Activated CD8-positive, alpha-beta memory T cell treated with anti-CD3 and anti-CD28 coated beads, Interleukin-2, amount 10 ng/mL, durations not matched to agents 7 days and 5 days (primary cell): ENCODE measurements at regions of chr22 and their contacts with region 1.

Region 1: DNA sequence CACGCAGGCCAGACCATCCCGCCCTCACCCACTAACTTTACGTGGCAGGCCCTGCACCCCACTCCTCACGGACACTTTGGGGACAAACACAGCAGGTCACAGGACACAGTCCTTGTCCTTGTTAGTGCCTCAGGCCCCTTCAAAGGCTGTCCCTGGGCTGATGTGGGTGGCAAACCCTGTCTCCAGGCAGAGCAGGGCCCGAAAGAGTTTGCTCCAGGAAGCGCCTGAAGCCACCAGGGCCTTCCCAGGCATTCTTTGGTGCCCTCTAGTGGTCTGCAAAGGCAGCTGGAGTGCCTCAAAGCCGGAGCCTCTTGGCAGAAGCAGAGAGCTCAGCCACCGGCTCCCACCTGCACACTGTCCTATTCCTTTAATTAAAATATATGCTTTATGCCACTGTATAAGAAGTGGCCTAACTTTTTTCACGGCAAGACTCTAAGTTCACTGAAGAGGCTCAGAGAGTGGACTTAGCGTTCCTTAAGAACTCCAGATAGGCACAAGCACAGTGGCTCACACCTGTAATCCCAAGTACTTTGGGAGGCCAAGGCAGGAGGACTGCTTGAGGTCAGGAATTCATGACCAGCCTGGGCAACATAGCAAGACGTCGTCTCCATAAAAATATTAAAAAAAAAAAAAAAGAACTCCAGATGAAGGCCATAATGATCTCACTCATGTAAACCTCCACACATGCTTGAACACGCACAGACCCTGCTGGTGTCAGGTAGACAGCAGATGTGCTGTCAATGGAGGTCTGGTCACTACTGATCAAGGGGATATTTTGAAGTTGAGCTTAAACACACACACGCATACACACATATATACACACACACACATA is 11.1 kb downstream of the TXN2 start:
- DNase-seq: peak; percentile 91
- ATAC-seq: peak; percentile 95
- H3K4me3 Mint-ChIP-seq: no peak overlapping the region
- H3K27ac Mint-ChIP-seq: peak overlapping the region; percentile 76
- H3K4me1 Mint-ChIP-seq: peaks cover 35% of the 10 kb centered on the region
- H3K27me3 Mint-ChIP-seq: no peaks in the 10 kb centered on the region

Region 2: GRCh38 chr22:36211237-36211861 is 259.0 kb before region 1 on chr22:
- CTCF ChIA-PET with region 1: no interaction called
- DNase-seq: peak; percentile 56
- ATAC-seq: no peak
- H3K4me3 Mint-ChIP-seq: no peak overlapping the region
- H3K27ac Mint-ChIP-seq: no peak overlapping the region
- H3K4me1 Mint-ChIP-seq: peaks cover 32% of the 10 kb centered on the region
- H3K27me3 Mint-ChIP-seq: peaks cover 58% of the 10 kb centered on the region

Region 3: GRCh38 chr22:36286471-36287224 is 183.7 kb before region 1 on chr22:
- CTCF ChIA-PET with region 1: interaction called, 11 read pairs
- DNase-seq: peak; percentile 72
- ATAC-seq: peak; percentile 78
- H3K4me3 Mint-ChIP-seq: no peak overlapping the region
- H3K27ac Mint-ChIP-seq: peak overlapping the region; percentile 33
- H3K4me1 Mint-ChIP-seq: peaks cover 42% of the 10 kb centered on the region
- H3K27me3 Mint-ChIP-seq: no peaks in the 10 kb centered on the region

Region 4: GRCh38 chr22:36301384-36301828 is 169.0 kb before region 1 on chr22:
- CTCF ChIA-PET with region 1: interaction called, 74 read pairs
- DNase-seq: peak; percentile 86
- ATAC-seq: peak; percentile 86
- H3K4me3 Mint-ChIP-seq: no peak overlapping the region
- H3K27ac Mint-ChIP-seq: peak overlapping the region; percentile 71
- H3K4me1 Mint-ChIP-seq: peaks cover 9% of the 10 kb centered on the region
- H3K27me3 Mint-ChIP-seq: no peaks in the 10 kb centered on the region

Region 5: GRCh38 chr22:36356708-36357694 is 113.4 kb before region 1 on chr22:
- CTCF ChIA-PET with region 1: interaction called, 16 read pairs
- DNase-seq: peak; percentile 73
- ATAC-seq: peak; percentile 33
- H3K4me3 Mint-ChIP-seq: peak overlapping the region; percentile 60
- H3K27ac Mint-ChIP-seq: peak overlapping the region; percentile 86
- H3K4me1 Mint-ChIP-seq: peaks cover 94% of the 10 kb centered on the region
- H3K27me3 Mint-ChIP-seq: no peaks in the 10 kb centered on the region

Region 6: DNA sequence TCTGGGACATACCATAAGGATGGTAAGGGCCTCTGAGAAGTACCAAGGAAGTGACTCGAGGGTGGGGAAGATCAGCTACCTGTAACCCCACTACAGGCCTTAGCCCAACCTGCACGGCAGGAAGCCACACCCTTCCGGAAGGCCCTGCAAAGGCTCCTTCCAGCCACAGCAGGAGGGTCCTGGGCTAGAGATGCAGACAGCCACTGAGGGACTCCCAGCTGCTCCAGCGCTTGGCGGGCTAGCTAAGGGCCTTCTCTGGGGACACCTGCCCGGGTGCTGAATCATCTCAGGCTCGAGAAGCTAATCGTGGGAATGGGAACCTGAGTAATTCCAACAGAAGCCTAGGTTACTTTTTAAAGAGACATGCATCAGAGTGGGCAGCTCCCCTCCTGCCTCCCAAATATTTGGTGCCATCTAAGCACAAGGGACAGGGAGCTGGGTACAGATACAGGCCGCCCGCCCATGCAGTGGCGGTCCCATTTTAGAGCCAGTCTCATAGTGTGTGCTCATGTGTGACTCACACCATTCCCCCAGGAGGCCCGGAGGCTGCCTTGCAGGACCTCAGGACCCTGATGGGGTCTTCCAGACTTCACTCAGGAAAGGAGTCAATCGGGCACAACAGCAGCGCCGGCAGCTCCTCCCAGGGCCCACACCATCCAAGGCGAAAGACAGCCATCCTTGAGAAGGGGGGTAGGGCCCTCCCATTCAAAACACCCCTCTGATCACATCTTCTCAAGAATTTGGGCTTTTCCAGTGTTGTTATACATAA is 90.6 kb before region 1 on chr22:
- CTCF ChIA-PET with region 1: interaction called, 21 read pairs
- DNase-seq: peak; percentile 81
- ATAC-seq: peak; percentile 51
- H3K4me3 Mint-ChIP-seq: peak overlapping the region; percentile 70
- H3K27ac Mint-ChIP-seq: peak overlapping the region; percentile 93
- H3K4me1 Mint-ChIP-seq: peaks cover 92% of the 10 kb centered on the region
- H3K27me3 Mint-ChIP-seq: no peaks in the 10 kb centered on the region

Region 7: GRCh38 chr22:36405671-36406538 is 64.5 kb before region 1 on chr22:
- CTCF ChIA-PET with region 1: interaction called, 17 read pairs
- DNase-seq: peak; percentile 86
- ATAC-seq: peak; percentile 54
- H3K4me3 Mint-ChIP-seq: peak overlapping the region; percentile 0
- H3K27ac Mint-ChIP-seq: peak overlapping the region; percentile 95
- H3K4me1 Mint-ChIP-seq: peaks cover 47% of the 10 kb centered on the region
- H3K27me3 Mint-ChIP-seq: no peaks in the 10 kb centered on the region

Region 8: DNA sequence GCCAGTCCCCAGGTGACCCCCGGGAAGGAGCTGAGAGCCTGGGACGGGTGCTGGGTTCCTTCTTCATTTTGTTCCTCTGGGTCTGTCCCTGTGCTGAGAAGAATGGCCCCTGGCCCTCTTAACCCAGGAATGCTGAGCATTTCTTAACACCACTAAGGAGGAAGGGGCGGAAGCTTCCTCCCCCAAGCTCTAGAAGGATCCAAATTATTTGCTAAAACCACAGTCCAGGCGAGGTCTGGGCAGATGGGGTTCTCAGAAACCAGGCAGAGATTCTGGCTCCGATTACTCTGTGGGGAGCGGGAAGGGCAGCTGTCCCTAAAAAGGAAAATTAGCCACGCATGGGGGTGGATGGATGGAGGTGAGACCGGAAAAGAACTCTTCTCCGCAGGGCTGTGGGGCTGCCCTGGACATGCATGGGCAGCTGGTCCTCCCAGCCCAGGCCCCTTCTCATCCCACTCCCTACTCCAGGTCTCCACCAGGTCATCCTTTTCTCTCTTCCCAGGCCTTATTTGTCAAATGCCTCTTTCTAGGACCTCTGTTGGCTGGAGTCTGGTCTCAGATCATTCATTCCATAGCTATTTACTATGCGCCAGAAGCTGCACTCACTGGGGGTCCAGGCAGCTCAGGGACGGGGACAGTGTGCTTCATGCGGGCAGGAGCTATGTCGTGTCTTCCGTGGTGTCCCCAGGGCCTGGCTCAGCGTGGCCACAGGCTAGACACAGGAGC is 37.6 kb before region 1 on chr22:
- CTCF ChIA-PET with region 1: no interaction called
- DNase-seq: no peak
- ATAC-seq: no peak
- H3K4me3 Mint-ChIP-seq: no peak overlapping the region
- H3K27ac Mint-ChIP-seq: no peak overlapping the region
- H3K4me1 Mint-ChIP-seq: peaks cover 23% of the 10 kb centered on the region
- H3K27me3 Mint-ChIP-seq: no peaks in the 10 kb centered on the region